Activated CD4-positive, alpha-beta T cell treated with anti-CD3 and anti-CD28 coated beads, Interleukin-2, amount 10 ng/mL, durations not matched to agents 24 days and 14 days (primary cell): ENCODE measurements at regions of chr5 and their contacts with region 1.

Region 1: GRCh38 chr5:111158105-111158744 is 66.0 kb upstream of the CAMK4 start:
- DNase-seq: peak; percentile 94
- H3K4me3 Mint-ChIP-seq: no peak overlapping the region
- H3K27ac Mint-ChIP-seq: no peak overlapping the region
- H3K4me1 Mint-ChIP-seq: peaks cover 2% of the 10 kb centered on the region
- H3K27me3 Mint-ChIP-seq: peaks cover 3% of the 10 kb centered on the region

Region 2: GRCh38 chr5:111013011-111013410 is 145.2 kb before region 1 on chr5:
- intact Hi-C with region 1: no loop called
- DNase-seq: no peak
- H3K4me3 Mint-ChIP-seq: no peak overlapping the region
- H3K27ac Mint-ChIP-seq: no peak overlapping the region
- H3K4me1 Mint-ChIP-seq: no peaks in the 10 kb centered on the region
- H3K27me3 Mint-ChIP-seq: peaks cover 8% of the 10 kb centered on the region

Region 3: DNA sequence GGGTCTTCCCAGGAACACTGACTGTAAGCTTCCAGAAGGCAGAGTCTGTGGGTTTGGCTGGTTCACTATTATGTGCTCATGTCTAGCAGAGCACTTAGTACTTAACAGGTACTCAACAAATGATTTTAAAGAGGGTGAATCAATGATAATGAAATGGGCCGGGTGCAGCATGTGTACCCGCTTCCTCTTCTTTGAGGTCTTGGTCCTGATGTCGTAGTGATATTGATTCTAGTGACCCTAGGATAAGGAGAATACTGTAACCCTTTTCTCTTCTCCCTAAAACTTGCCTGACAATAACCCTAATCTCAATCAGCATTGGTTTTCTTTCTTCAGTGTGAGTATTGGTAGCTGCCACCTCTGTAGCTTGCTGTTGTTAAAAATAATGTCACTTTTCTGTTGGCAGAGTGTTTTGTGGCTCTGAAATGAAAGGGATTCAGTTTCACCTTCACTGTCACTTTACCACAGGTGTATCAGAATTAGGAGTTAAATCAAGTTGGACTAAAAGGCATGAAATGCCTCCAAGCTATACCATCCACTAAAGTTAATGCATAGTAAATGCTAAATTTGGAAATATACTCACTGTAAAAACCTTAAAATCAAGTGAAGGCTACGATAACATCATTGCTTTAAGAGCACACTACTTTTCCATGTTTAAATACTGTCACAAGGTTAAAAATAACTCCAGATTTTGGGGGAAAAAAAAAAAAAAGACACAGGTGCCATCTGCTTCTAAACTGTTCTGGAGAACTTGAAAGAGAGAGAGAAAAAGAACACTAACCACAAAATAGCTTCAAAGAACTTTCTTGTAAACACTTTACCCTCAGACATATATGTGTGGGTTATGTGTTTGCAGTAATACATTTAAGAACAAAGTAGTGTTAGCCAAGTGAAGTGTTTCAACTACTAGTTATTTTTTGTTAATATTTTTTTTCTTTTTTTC is 71.9 kb after region 1 on chr5:
- intact Hi-C with region 1: loop called (anchors 2 kb)
- DNase-seq: peak; percentile 75
- H3K4me3 Mint-ChIP-seq: peak overlapping the region; percentile 86
- H3K27ac Mint-ChIP-seq: peak overlapping the region; percentile 98
- H3K4me1 Mint-ChIP-seq: peaks cover 74% of the 10 kb centered on the region
- H3K27me3 Mint-ChIP-seq: no peaks in the 10 kb centered on the region

Region 4: DNA sequence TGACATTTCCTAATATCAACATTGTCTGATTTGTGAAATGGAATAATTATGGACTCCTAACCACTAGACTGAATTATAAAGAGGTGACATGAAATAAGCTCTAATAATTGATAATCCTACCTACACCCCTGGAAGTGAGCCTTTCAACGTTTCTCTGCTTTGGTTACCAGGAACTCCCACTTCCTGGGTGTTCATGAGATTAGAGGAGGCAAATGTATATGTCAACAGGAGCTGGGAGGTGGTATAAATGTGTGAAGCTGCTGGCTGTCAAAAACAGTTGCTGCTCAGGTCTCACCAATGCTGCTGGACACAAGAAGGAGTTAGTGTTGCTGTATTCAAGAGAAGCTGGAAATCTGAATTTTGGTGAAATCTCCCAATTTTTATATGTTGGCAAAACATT is 162.7 kb after region 1 on chr5:
- intact Hi-C with region 1: no loop called
- DNase-seq: peak; percentile 65
- H3K4me3 Mint-ChIP-seq: no peak overlapping the region
- H3K27ac Mint-ChIP-seq: no peak overlapping the region
- H3K4me1 Mint-ChIP-seq: peaks cover 34% of the 10 kb centered on the region
- H3K27me3 Mint-ChIP-seq: no peaks in the 10 kb centered on the region